MCF 10A (cell line): ENCODE measurements at regions of chr3 and their contacts with region 1.

Region 1: GRCh38 chr3:180690061-180690460 is 10.8 kb upstream of the CCDC39 start:
- DNase-seq: no peak
- H3K4me3 Mint-ChIP-seq: peak overlapping the region; percentile 11
- H3K27ac Mint-ChIP-seq: no peak overlapping the region
- H3K4me1 Mint-ChIP-seq: peaks cover 12% of the 10 kb centered on the region
- H3K27me3 Mint-ChIP-seq: no peaks in the 10 kb centered on the region
- CTCF ChIP-seq: peak; percentile 49

Region 2: DNA sequence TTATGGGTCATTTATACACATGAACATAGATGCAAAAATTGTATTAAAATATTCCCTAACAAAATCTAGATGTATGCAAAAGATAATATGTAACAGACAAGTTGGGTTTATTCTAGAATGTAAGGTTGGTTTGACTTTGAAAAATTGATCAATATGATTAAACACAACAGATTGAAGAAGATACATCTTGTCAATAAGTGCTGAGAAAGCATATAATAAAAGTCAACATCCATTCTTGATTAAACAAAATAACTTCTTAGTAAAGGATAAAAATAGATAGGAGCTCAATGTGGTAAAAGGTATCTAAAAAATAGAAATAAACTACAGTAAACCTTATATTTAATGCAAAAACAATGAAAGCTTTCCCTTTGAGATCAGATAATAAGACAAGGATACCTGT is 49.1 kb before region 1 on chr3:
- CTCF ChIA-PET with region 1: no interaction called
- POLR2A ChIA-PET with region 1: no interaction called
- intact Hi-C with region 1: no loop called
- DNase-seq: no peak
- H3K4me3 Mint-ChIP-seq: no peak overlapping the region
- H3K27ac Mint-ChIP-seq: no peak overlapping the region
- H3K4me1 Mint-ChIP-seq: no peaks in the 10 kb centered on the region
- H3K27me3 Mint-ChIP-seq: peaks cover 11% of the 10 kb centered on the region
- CTCF ChIP-seq: no peak

Region 3: DNA sequence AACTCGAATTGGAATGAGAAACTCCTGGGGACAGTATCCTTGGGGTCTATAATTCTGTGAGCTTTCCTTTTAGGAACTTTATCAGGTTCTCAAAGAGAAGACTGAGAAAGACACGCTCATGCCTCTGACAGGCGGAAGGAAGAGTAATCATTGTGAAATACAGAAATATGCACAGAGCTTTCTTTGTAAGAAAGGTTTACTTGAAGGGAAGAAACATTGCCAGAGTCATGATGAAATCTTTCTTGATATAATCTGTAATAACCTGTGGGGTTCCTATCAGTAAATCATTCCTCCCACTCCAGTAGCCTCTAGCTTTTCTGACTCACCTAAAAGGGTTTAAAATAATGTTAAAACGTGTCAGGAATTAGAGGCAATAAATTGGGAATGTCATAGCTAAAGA is 72.8 kb after region 1 on chr3:
- CTCF ChIA-PET with region 1: interaction called, 6 read pairs
- POLR2A ChIA-PET with region 1: interaction called, 12 read pairs
- intact Hi-C with region 1: no loop called
- DNase-seq: peak; percentile 53
- H3K4me3 Mint-ChIP-seq: peak overlapping the region; percentile 60
- H3K27ac Mint-ChIP-seq: peak overlapping the region; percentile 65
- H3K4me1 Mint-ChIP-seq: peaks cover 16% of the 10 kb centered on the region
- H3K27me3 Mint-ChIP-seq: no peaks in the 10 kb centered on the region
- CTCF ChIP-seq: no peak

Region 4: GRCh38 chr3:180802837-180803236 is 112.8 kb after region 1 on chr3:
- CTCF ChIA-PET with region 1: interaction called, 4 read pairs
- POLR2A ChIA-PET with region 1: no interaction called
- intact Hi-C with region 1: loop called (anchors 2 kb)
- DNase-seq: peak; percentile 46
- H3K4me3 Mint-ChIP-seq: no peak overlapping the region
- H3K27ac Mint-ChIP-seq: no peak overlapping the region
- H3K4me1 Mint-ChIP-seq: no peaks in the 10 kb centered on the region
- H3K27me3 Mint-ChIP-seq: no peaks in the 10 kb centered on the region
- CTCF ChIP-seq: peak; percentile 48

Region 5: DNA sequence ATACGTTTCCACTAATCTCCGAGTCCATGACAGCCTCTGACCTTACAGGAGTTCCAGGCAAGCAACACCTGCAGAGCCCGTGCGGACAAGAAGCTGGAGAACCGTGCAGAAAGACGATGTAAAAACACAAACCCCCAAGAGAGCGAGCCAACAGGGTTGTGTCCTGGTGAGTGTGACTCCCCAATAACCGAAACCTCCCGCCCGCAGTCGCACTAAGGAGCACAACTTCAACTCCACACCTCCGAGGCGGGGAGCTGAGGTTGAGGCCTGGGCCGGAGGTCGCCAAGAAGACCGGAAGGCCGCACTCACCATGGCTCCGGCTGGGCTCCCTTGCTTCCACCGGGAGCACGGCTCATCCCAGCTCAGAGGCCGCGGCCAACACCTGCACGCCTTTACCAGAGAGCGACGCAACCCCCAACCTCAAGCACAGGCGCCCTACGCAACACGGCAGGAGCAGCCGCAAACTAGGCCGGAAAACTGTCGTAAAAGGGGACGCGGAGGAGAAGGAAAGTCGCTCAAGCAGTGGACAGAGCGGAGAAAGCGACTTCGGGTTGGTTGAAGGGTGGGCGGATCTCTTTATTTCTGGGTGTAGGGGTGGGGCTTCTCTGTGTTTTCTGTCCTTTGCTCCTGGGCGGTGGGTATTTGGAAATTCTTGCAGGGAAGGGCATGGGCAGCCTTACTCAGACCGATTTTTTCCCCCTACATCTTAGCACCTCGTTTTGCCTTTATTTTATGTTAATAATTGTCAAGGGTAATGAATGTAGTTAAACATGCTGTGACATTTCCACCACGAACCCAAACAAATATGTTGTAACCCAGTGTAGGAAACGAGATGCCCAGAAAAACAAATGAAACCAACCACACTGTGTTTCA is 299.5 kb after region 1 on chr3 and contains the start of gene DNAJC19:
- CTCF ChIA-PET with region 1: no interaction called
- POLR2A ChIA-PET with region 1: no interaction called
- intact Hi-C with region 1: loop called (anchors 10 kb)
- DNase-seq: peak; percentile 97
- H3K4me3 Mint-ChIP-seq: peak within 1 kb of the TSS; percentile 99
- H3K27ac Mint-ChIP-seq: peak within 1 kb of the TSS; percentile 95
- H3K4me1 Mint-ChIP-seq: peaks cover 5% of the 10 kb centered on the region
- H3K27me3 Mint-ChIP-seq: no peaks in the 10 kb centered on the region
- CTCF ChIP-seq: no peak
- total RNA-seq, gene DNAJC19: 73.5 and 94.5 TPM in 2 replicates

Region 6: GRCh38 chr3:181700168-181701087 is 1010.4 kb after region 1 on chr3:
- CTCF ChIA-PET with region 1: interaction called, 3 read pairs
- POLR2A ChIA-PET with region 1: no interaction called
- intact Hi-C with region 1: loop called (anchors 2 kb)
- DNase-seq: peak; percentile 84
- H3K4me3 Mint-ChIP-seq: peak overlapping the region; percentile 60
- H3K27ac Mint-ChIP-seq: peak overlapping the region; percentile 65
- H3K4me1 Mint-ChIP-seq: peaks cover 16% of the 10 kb centered on the region
- H3K27me3 Mint-ChIP-seq: no peaks in the 10 kb centered on the region
- CTCF ChIP-seq: peak; percentile 87